MCF 10A (cell line): ENCODE measurements at regions of chr15 and their contacts with region 1.

Region 1: DNA sequence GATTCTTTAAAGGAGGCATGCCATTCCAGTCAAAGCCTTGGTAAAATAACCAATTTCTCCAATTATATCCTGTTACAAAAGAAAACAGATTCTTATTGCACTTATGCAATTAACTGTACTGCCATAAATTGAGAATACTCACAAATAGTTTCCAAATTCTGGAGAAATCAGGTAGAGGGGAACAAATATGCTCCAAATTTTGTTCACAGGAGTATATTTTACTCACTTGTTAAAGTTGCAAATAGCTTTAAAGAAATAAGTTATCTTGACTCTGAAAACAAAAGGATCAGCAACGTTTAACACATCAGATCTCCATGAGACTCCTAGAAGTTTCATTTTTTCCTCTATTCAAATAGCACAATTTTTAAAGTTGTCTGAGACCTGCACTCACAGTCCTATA is 712.1 kb upstream of the ARRDC4 start:
- DNase-seq: no peak
- H3K4me3 Mint-ChIP-seq: no peak overlapping the region
- H3K27ac Mint-ChIP-seq: no peak overlapping the region
- H3K4me1 Mint-ChIP-seq: no peaks in the 10 kb centered on the region
- H3K27me3 Mint-ChIP-seq: peaks cover 60% of the 10 kb centered on the region
- CTCF ChIP-seq: no peak

Region 2: GRCh38 chr15:96893159-96893906 is 355.0 kb before region 1 on chr15:
- CTCF ChIA-PET with region 1: interaction called, 4 read pairs
- POLR2A ChIA-PET with region 1: no interaction called
- intact Hi-C with region 1: loop called (anchors 5 kb)
- DNase-seq: peak; percentile 49
- H3K4me3 Mint-ChIP-seq: no peak overlapping the region
- H3K27ac Mint-ChIP-seq: no peak overlapping the region
- H3K4me1 Mint-ChIP-seq: peaks cover 9% of the 10 kb centered on the region
- H3K27me3 Mint-ChIP-seq: no peaks in the 10 kb centered on the region
- CTCF ChIP-seq: peak; percentile 62

Region 3: GRCh38 chr15:97234851-97235610 is 13.3 kb before region 1 on chr15:
- CTCF ChIA-PET with region 1: interaction called, 19 read pairs
- POLR2A ChIA-PET with region 1: no interaction called
- intact Hi-C with region 1: no loop called
- DNase-seq: peak; percentile 61
- H3K4me3 Mint-ChIP-seq: no peak overlapping the region
- H3K27ac Mint-ChIP-seq: no peak overlapping the region
- H3K4me1 Mint-ChIP-seq: peaks cover 17% of the 10 kb centered on the region
- H3K27me3 Mint-ChIP-seq: peaks cover 70% of the 10 kb centered on the region
- CTCF ChIP-seq: peak; percentile 79

Region 4: GRCh38 chr15:97259943-97260342 is 11.6 kb after region 1 on chr15:
- CTCF ChIA-PET with region 1: interaction called, 11 read pairs
- POLR2A ChIA-PET with region 1: no interaction called
- intact Hi-C with region 1: no loop called
- DNase-seq: no peak
- H3K4me3 Mint-ChIP-seq: no peak overlapping the region
- H3K27ac Mint-ChIP-seq: no peak overlapping the region
- H3K4me1 Mint-ChIP-seq: no peaks in the 10 kb centered on the region
- H3K27me3 Mint-ChIP-seq: peaks cover 62% of the 10 kb centered on the region
- CTCF ChIP-seq: no peak

Region 5: DNA sequence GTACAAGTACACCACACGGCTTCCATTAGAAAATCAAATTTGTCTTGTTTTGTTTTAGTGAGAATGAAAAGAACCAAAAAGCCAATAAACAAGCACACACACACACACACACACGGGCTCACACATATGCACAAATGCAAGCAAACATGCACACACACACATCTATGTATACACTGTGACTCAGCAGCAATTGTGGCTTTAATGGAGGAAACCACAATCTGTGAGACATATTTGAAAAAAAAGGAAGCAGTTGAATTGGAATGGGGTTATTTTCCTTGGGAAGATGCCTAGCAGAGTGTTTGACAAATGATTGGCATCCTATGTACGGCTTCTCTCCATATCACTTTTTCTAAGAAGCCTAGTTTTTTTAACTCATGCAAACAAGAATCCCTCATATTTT is 511.0 kb after region 1 on chr15:
- CTCF ChIA-PET with region 1: interaction called, 20 read pairs
- POLR2A ChIA-PET with region 1: no interaction called
- intact Hi-C with region 1: loop called (anchors 2 kb)
- DNase-seq: peak; percentile 57
- H3K4me3 Mint-ChIP-seq: no peak overlapping the region
- H3K27ac Mint-ChIP-seq: no peak overlapping the region
- H3K4me1 Mint-ChIP-seq: peaks cover 6% of the 10 kb centered on the region
- H3K27me3 Mint-ChIP-seq: peaks cover 42% of the 10 kb centered on the region
- CTCF ChIP-seq: no peak

Region 6: GRCh38 chr15:98292442-98293240 is 1044.3 kb after region 1 on chr15:
- CTCF ChIA-PET with region 1: interaction called, 3 read pairs
- POLR2A ChIA-PET with region 1: no interaction called
- intact Hi-C with region 1: loop called (anchors 10 kb)
- DNase-seq: peak; percentile 60
- H3K4me3 Mint-ChIP-seq: no peak overlapping the region
- H3K27ac Mint-ChIP-seq: no peak overlapping the region
- H3K4me1 Mint-ChIP-seq: no peaks in the 10 kb centered on the region
- H3K27me3 Mint-ChIP-seq: peaks cover 16% of the 10 kb centered on the region
- CTCF ChIP-seq: peak; percentile 78